Ovary (tissue), 10 donors: ENCODE measurements at regions of chr11 and their contacts with region 1.

Region 1: GRCh38 chr11:34537656-34538055 is 24.1 kb upstream of the ELF5 start:
- DNase-seq: no peak
- H3K4me3 ChIP-seq: no peak overlapping the region
- H3K27ac ChIP-seq: no peak overlapping the region
- H3K4me1 ChIP-seq: no peaks in the 10 kb centered on the region
- H3K27me3 ChIP-seq: no peaks in the 10 kb centered on the region
- CTCF ChIP-seq: no peak
- EP300 ChIP-seq: no peak
- POLR2A ChIP-seq: no peak

Region 2: DNA sequence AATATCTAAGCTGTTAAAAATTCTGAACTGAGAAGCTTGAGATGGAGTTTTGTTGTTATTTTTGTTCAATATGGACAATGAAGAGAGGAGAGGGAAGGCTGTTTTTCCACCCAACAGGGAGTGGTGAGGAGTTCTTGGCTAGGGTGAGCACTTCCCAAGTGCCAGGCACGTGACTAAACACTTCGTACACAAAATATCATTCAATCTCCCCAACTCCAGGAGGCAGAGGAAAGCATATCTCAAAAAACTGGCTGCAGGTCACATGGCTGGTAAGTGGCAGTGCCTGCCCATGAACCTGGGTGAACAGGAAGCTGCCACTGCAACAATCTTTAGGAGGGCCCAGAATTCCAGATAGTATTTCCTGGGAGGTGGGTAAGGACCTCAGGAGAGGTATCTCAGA is 35.7 kb before region 1 on chr11:
- intact Hi-C with region 1: loop called in 1 of 4 experiments (anchors 1 kb)
- DNase-seq: no peak
- H3K4me3 ChIP-seq: no peak overlapping the region
- H3K27ac ChIP-seq: no peak overlapping the region
- H3K4me1 ChIP-seq: no peaks in the 10 kb centered on the region
- H3K27me3 ChIP-seq: no peaks in the 10 kb centered on the region
- CTCF ChIP-seq: no peak
- EP300 ChIP-seq: no peak
- POLR2A ChIP-seq: no peak